ENCODE measurements at regions of chr7 and their contacts with region 1.

Region 1: GRCh38 chr7:113118074-113118959 is at the start of gene SMIM30:
- DNase-seq: peak; percentile 82
- H3K4me3 ChIP-seq: peak within 1 kb of the TSS; percentile 64 to 98 (median 94)
- H3K27ac ChIP-seq: peak within 1 kb of the TSS; percentile 52
- H3K4me1 ChIP-seq: peaks cover 5% of the 10 kb centered on the region
- H3K27me3 ChIP-seq: no peaks in the 10 kb centered on the region
- CTCF ChIP-seq: peak in 1 of 2 donors; percentile 4
- total RNA-seq, gene SMIM30: 44.1 to 80.5 TPM

Region 2: DNA sequence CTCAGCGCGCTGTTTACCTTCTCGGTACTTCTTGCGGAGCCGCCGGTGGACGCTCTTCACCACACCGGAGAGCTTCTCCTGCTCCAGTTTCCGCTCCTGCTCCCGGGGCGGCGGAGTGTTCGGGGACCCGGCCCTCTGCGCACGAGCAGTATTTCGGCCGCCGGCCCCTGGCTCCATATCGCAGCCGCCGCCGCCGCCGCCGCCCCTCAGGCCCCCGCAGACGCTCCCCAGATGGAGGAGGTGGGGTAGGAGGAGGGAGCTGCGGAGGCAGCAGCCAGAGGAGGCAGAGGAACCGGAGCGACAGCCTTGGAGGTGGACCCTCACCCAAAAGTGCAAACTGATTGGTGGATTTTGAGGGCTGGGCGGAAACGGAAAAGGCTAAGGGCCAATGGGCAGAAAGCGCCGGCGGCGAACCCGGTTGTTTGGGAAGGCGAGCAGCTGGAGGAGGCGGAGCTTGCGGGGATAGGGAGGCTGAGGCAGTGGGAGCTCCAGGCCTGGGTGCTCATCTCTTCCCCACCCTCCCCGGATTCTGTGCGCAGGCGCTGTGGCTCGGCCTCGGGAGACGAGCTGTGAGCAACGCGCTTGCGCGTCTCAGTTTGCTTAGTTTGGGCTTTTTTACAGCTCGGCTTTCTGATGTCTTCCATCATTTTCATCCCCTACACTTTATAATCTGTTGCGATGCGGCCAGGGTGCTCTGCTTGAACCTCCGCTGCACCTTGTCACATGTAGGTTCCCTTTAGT is 178.6 kb before region 1 on chr7:
- CTCF ChIA-PET with region 1: no interaction called
- dilution Hi-C with region 1: no loop called
- in situ Hi-C with region 1: no loop called
- intact Hi-C with region 1: loop called (anchors 10 kb)
- DNase-seq: peak; percentile 99
- H3K4me3 ChIP-seq: peak overlapping the region; percentile 83 to 95 (median 83)
- H3K27ac ChIP-seq: peak overlapping the region; percentile 61
- H3K4me1 ChIP-seq: peaks cover 14% of the 10 kb centered on the region
- H3K27me3 ChIP-seq: no peaks in the 10 kb centered on the region
- CTCF ChIP-seq: no peak

Region 3: DNA sequence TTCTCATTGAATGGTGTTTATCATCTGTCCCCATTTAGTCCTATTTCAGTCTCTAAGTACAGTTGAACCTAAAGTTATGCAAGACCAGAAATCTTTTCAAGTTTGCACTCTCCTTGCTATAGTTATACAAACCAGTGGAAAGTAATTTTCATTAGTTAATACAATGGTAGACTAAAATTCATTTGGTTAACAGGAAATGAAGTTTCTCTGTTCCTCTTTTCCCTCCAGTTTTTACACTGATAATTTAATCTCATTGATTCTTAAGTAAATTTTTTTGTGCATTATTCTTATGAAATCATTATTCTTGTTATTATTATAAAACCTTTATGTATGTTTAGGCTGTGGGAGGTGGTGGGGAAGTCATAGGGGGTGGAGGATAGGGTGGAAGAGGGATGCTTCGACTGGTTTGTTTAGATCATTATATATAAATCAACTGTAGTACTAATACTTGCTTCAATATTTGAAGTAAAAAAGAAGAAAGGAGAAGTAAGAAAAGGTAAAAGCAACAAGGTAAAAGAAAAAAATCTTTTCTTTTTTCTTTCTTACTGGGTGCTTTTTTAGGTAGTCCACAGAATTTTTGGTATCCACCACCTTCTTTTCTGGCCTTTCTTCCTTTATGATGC is 135.8 kb before region 1 on chr7:
- CTCF ChIA-PET with region 1: no interaction called
- dilution Hi-C with region 1: no loop called
- in situ Hi-C with region 1: no loop called
- intact Hi-C with region 1: no loop called
- DNase-seq: no peak
- H3K4me3 ChIP-seq: no peak overlapping the region
- H3K27ac ChIP-seq: no peak overlapping the region
- H3K4me1 ChIP-seq: peaks cover 24% of the 10 kb centered on the region
- H3K27me3 ChIP-seq: no peaks in the 10 kb centered on the region
- CTCF ChIP-seq: no peak

Region 4: GRCh38 chr7:113015032-113015645 is 103.2 kb before region 1 on chr7:
- CTCF ChIA-PET with region 1: no interaction called
- dilution Hi-C with region 1: no loop called
- in situ Hi-C with region 1: no loop called
- intact Hi-C with region 1: loop called (anchors 5 kb)
- DNase-seq: peak; percentile 27
- H3K4me3 ChIP-seq: no peak overlapping the region
- H3K27ac ChIP-seq: no peak overlapping the region
- H3K4me1 ChIP-seq: peaks cover 12% of the 10 kb centered on the region
- H3K27me3 ChIP-seq: no peaks in the 10 kb centered on the region
- CTCF ChIP-seq: peak; percentile 42 to 58

Region 5: GRCh38 chr7:114426382-114427223 is 1308.3 kb after region 1 on chr7:
- CTCF ChIA-PET with region 1: interaction called, 15 read pairs
- dilution Hi-C with region 1: no loop called
- in situ Hi-C with region 1: no loop called
- intact Hi-C with region 1: no loop called
- DNase-seq: no peak
- H3K4me3 ChIP-seq: no peak overlapping the region
- H3K27ac ChIP-seq: no peak overlapping the region
- H3K4me1 ChIP-seq: no peaks in the 10 kb centered on the region
- H3K27me3 ChIP-seq: peaks cover 2% of the 10 kb centered on the region
- CTCF ChIP-seq: peak; percentile 17 to 42

Measured in mammary epithelial cell (primary cell).